ENCODE measurements at regions of chr9 and their contacts with region 1.

Region 1: GRCh38 chr9:105264380-105264779 is 19.9 kb downstream of the SLC44A1 start:
- DNase-seq: peak; percentile 53
- H3K4me3 Mint-ChIP-seq: no peak overlapping the region
- H3K27ac Mint-ChIP-seq: peak overlapping the region; percentile 6
- H3K4me1 Mint-ChIP-seq: peaks cover 16% of the 10 kb centered on the region
- H3K27me3 Mint-ChIP-seq: no peaks in the 10 kb centered on the region
- CTCF ChIP-seq: no peak

Region 2: GRCh38 chr9:105299190-105299854 is 34.9 kb after region 1 on chr9:
- CTCF ChIA-PET with region 1: no interaction called
- POLR2A ChIA-PET with region 1: interaction called, 3 read pairs
- intact Hi-C with region 1: loop called (anchors 5 kb)
- DNase-seq: peak; percentile 86
- H3K4me3 Mint-ChIP-seq: no peak overlapping the region
- H3K27ac Mint-ChIP-seq: peak overlapping the region; percentile 78
- H3K4me1 Mint-ChIP-seq: peaks cover 30% of the 10 kb centered on the region
- H3K27me3 Mint-ChIP-seq: no peaks in the 10 kb centered on the region
- CTCF ChIP-seq: no peak

Region 3: GRCh38 chr9:105510024-105510423 is 245.6 kb after region 1 on chr9:
- CTCF ChIA-PET with region 1: no interaction called
- POLR2A ChIA-PET with region 1: no interaction called
- intact Hi-C with region 1: no loop called
- DNase-seq: peak; percentile 36
- H3K4me3 Mint-ChIP-seq: no peak overlapping the region
- H3K27ac Mint-ChIP-seq: peak overlapping the region; percentile 67
- H3K4me1 Mint-ChIP-seq: no peaks in the 10 kb centered on the region
- H3K27me3 Mint-ChIP-seq: no peaks in the 10 kb centered on the region
- CTCF ChIP-seq: no peak

Measured in MCF 10A (cell line).